ENCODE measurements at regions of chr11 and their contacts with region 1.

Region 1: DNA sequence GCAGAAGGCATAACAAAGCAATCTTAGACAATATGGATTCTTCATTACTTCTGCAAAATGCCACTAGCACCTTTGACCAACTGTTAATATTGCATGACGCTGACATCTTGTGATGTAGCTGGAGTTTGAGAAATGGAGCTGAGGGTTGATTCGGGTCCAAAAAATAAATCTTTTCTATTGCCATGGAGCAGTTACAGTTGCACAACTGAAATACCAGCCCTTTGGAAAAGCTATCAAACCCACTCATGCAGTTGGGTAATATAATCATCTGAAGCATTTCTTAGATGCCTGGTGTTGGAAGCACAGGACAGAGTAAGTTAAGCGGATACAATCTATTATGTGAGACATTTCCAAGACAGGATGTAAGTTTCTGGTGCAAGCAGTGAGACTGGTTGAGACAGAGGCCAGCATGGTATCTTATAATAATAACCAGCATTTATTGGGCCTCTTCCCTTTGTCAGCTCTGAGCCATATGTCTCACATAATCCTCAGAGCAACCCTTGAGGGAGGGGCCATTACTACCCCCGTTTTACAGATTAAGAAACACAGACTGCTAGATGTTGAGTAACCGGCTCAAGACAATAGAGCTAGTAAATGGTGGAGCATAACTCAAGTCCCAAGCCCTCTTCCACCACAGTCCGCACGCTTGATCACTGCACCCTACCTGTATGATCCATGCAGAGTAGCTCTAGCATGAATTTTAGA is 74.9 kb upstream of the CAPRIN1 start:
- DNase-seq: no peak
- H3K4me3 ChIP-seq: no peak overlapping the region
- H3K27ac ChIP-seq: no peak overlapping the region
- H3K4me1 ChIP-seq: peaks cover 0 to 11% of the 10 kb centered on the region in 2 experiments; a peak in 1 of 4 replicates
- H3K27me3 ChIP-seq: peaks cover 8% of the 10 kb centered on the region; the same call in 1 of the 2 replicates
- CTCF ChIP-seq: no peak
- EP300 ChIP-seq: no peak
- RAD21 ChIP-seq: no peak

Region 2: GRCh38 chr11:33736148-33736809 is 240.4 kb before region 1 on chr11 and contains the start of gene CD59:
- CTCF ChIA-PET with region 1: no interaction called
- POLR2A ChIA-PET with region 1: no interaction called
- DNase-seq: peak; percentile 97
- H3K4me3 ChIP-seq: peak within 1 kb of the TSS; percentile 86 to 91
- H3K27ac ChIP-seq: peak within 1 kb of the TSS; percentile 91 to 94
- H3K4me1 ChIP-seq: peaks cover 21 to 28% of the 10 kb centered on the region in 2 experiments; a peak in 3 of 4 replicates
- H3K27me3 ChIP-seq: no peaks in the 10 kb centered on the region
- CTCF ChIP-seq: no peak
- EP300 ChIP-seq: no peak
- RAD21 ChIP-seq: no peak
- polyA plus RNA-seq, gene CD59: 616 and 849 TPM in 2 replicates

Region 3: GRCh38 chr11:33773987-33774735 is 202.5 kb before region 1 on chr11 and contains the start of gene FBXO3:
- CTCF ChIA-PET with region 1: no interaction called
- POLR2A ChIA-PET with region 1: no interaction called
- DNase-seq: peak; percentile 98
- H3K4me3 ChIP-seq: peak within 1 kb of the TSS; percentile 83 to 93
- H3K27ac ChIP-seq: peak within 1 kb of the TSS; percentile 59 to 74; a peak in 3 of 4 replicates
- H3K4me1 ChIP-seq: peaks cover 29 to 38% of the 10 kb centered on the region in 2 experiments; a peak in 3 of 4 replicates
- H3K27me3 ChIP-seq: no peaks in the 10 kb centered on the region
- CTCF ChIP-seq: no peak
- EP300 ChIP-seq: no peak
- RAD21 ChIP-seq: no peak
- polyA plus RNA-seq, gene FBXO3: 17.9 and 27.0 TPM in 2 replicates

Region 4: GRCh38 chr11:33835143-33835878 is 141.3 kb before region 1 on chr11:
- CTCF ChIA-PET with region 1: interaction called, 40 read pairs
- POLR2A ChIA-PET with region 1: no interaction called
- DNase-seq: peak; percentile 39
- H3K4me3 ChIP-seq: no peak overlapping the region; a peak in 1 of 4 replicates
- H3K27ac ChIP-seq: no peak overlapping the region
- H3K4me1 ChIP-seq: peaks cover 0 to 23% of the 10 kb centered on the region in 2 experiments; a peak in 2 of 4 replicates
- H3K27me3 ChIP-seq: peaks cover 17% of the 10 kb centered on the region; the same call in 1 of the 2 replicates
- CTCF ChIP-seq: peak; percentile 60
- EP300 ChIP-seq: no peak
- RAD21 ChIP-seq: peak; percentile 70

Measured in SK-N-SH (cell line).